Thyroid gland (tissue), 4 donors: ENCODE measurements at regions of chr1 and their contacts with region 1.

Region 1: DNA sequence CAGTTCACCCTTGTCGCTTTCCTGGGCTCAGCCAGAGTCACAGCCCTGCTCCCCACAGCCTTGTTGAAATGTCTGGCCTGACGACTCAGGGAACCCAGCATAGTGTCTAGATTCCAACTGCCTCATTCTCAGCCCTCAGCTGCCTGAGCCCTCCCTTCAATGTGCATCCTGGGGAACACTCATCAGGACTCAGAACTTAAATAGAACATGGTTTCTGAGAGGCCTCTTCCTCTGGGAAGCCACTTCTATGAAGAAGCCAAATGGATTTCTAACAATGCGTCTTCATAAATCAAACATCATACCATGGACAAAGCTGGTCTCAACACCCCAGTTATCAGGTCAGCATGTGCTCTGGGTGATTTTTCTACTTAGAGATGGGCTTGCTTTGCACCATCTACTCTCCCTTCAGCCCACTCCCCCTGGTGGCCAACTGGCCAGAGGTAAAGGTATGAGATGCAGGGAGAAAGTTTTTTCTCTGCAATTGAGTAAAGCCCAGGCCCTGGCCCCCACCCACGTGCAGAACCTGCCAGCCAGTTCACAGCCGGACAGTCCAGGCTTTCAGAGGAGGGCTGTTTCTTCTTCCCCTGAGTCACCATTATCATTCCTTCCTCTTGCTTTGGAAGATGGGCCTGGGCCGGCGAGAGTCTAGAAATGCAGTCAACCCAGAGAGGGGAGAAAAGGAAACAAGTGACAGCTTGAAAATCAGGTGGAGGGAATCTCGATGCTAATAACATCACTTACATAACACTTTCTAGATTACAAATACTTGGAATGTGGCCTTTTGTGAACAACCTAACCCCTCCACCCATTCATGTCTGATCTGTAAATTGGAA is 32.1 kb downstream of the CD244 start:
- DNase-seq: peak; percentile 71 to 80
- H3K4me3 ChIP-seq: no peak overlapping the region
- H3K27ac ChIP-seq: no peak overlapping the region
- H3K4me1 ChIP-seq: no peaks in the 10 kb centered on the region
- H3K27me3 ChIP-seq: no peaks in the 10 kb centered on the region
- CTCF ChIP-seq: peak in 4 of 6 experiments; percentile 43 to 60 (median 52)
- POLR2A ChIP-seq: no peak

Region 2: DNA sequence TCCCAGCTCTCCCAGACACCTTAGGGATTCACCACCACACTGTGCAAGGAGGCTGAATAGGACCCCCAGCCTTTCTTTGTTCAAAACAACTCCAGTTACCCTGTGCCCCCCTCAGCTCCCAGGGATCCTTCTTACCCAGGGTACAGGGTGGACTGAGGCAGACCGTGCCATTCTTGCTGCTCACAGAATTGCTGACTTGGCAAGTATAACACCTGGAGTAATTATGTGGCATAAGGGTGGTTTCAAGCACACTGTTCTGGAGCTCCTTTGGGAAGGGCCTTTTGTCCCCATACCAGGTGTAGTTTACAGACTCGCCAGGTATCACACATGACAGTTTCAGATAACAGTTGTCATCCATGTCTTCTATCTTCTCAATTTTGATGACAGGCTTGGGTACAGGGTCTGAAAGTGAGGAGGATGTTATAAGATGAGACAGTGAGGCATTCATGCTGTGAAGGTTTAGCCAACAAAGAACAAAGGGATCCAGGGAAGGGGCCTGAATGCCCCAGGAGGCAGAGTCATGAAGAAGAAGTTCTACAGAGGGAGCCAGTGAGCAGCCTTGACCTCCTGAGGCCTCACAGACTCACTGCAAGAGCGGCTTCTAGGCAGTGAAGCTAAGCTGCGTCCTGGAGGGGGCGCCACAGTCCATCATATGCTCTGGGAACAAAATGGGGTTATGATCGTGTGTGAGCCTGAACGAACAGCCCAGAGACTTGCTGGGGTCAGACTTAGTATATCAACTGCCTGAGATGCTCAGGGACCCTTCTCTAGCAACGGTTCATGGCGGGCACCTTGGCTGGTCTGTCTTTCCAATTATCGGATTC is 149.3 kb before region 1 on chr1:
- intact Hi-C with region 1: loop called (anchors 5 kb)
- DNase-seq: peak; percentile 42 to 57
- H3K4me3 ChIP-seq: no peak overlapping the region
- H3K27ac ChIP-seq: no peak overlapping the region
- H3K4me1 ChIP-seq: no peaks in the 10 kb centered on the region
- H3K27me3 ChIP-seq: no peaks in the 10 kb centered on the region
- CTCF ChIP-seq: peak in 4 of 6 experiments; percentile 23 to 43 (median 40)
- POLR2A ChIP-seq: no peak

Region 3: GRCh38 chr1:160951443-160952128 is 121.0 kb after region 1 on chr1:
- intact Hi-C with region 1: loop called (anchors 2 kb)
- DNase-seq: peak; percentile 77 to 84
- H3K4me3 ChIP-seq: no peak overlapping the region
- H3K27ac ChIP-seq: no peak overlapping the region
- H3K4me1 ChIP-seq: peaks cover 0 to 11% of the 10 kb centered on the region in 2 donors
- H3K27me3 ChIP-seq: no peaks in the 10 kb centered on the region
- CTCF ChIP-seq: peak; percentile 29 to 83 (median 75)
- POLR2A ChIP-seq: no peak